ENCODE measurements at regions of chr7 and their contacts with region 1.

Region 1: GRCh38 chr7:33895025-33895804 is 10.1 kb upstream of the BMPER start:
- DNase-seq: peak; percentile 95
- H3K4me3 Mint-ChIP-seq: no peak overlapping the region
- H3K27ac Mint-ChIP-seq: no peak overlapping the region
- H3K4me1 Mint-ChIP-seq: peaks cover 18% of the 10 kb centered on the region
- H3K27me3 Mint-ChIP-seq: peaks cover 72% of the 10 kb centered on the region
- CTCF ChIP-seq: peak; percentile 95

Region 2: GRCh38 chr7:33757562-33758165 is 137.6 kb before region 1 on chr7:
- CTCF ChIA-PET with region 1: no interaction called
- intact Hi-C with region 1: loop called (anchors 5 kb)
- DNase-seq: peak; percentile 53
- H3K4me3 Mint-ChIP-seq: no peak overlapping the region
- H3K27ac Mint-ChIP-seq: no peak overlapping the region
- H3K4me1 Mint-ChIP-seq: no peaks in the 10 kb centered on the region
- H3K27me3 Mint-ChIP-seq: peaks cover 84% of the 10 kb centered on the region
- CTCF ChIP-seq: peak; percentile 83

Region 3: DNA sequence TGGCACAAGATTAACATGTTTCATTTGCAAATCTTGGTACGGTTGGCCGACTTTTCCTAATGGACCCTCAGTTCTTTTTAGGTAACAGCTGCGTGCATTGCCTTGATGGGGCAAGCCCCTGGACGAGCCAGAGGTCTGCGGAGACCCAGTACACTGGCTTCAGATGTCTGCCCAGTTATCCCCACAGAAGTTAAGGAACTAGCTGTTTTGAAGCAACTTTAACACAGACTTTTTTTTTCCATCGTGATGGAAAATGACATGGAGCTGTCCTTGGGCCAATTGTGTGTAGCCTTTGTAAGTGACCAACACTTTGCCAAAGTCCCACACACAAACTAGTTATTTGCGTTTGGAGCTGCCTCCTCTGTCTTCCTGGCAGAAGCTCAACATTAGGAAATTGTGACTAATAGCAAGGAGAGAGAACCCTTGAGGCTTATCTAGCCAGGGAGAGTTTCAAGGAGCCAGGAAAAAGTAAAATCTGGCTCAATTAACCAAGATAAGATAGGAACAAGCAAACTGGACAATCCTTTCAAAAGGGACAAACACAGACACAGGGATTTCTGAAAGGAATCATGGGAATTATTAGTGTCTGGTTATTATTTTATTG is 89.5 kb before region 1 on chr7:
- CTCF ChIA-PET with region 1: no interaction called
- intact Hi-C with region 1: no loop called
- DNase-seq: no peak
- H3K4me3 Mint-ChIP-seq: no peak overlapping the region
- H3K27ac Mint-ChIP-seq: no peak overlapping the region
- H3K4me1 Mint-ChIP-seq: no peaks in the 10 kb centered on the region
- H3K27me3 Mint-ChIP-seq: peaks cover 22% of the 10 kb centered on the region
- CTCF ChIP-seq: no peak